MCF 10A (cell line): ENCODE measurements at regions of chr5 and their contacts with region 1.

Region 1: GRCh38 chr5:141968914-141969608 is at the start of gene RNF14:
- DNase-seq: peak; percentile 97
- H3K4me3 Mint-ChIP-seq: peak within 1 kb of the TSS; percentile 88
- H3K27ac Mint-ChIP-seq: peak within 1 kb of the TSS; percentile 99
- H3K4me1 Mint-ChIP-seq: peaks cover 24% of the 10 kb centered on the region
- H3K27me3 Mint-ChIP-seq: no peaks in the 10 kb centered on the region
- CTCF ChIP-seq: peak; percentile 100
- total RNA-seq, gene RNF14: 78.0 and 81.3 TPM in 2 replicates

Region 2: GRCh38 chr5:141465351-141465750 is 503.7 kb before region 1 on chr5:
- CTCF ChIA-PET with region 1: no interaction called
- POLR2A ChIA-PET with region 1: no interaction called
- intact Hi-C with region 1: no loop called
- DNase-seq: no peak
- H3K4me3 Mint-ChIP-seq: no peak overlapping the region
- H3K27ac Mint-ChIP-seq: no peak overlapping the region
- H3K4me1 Mint-ChIP-seq: no peaks in the 10 kb centered on the region
- H3K27me3 Mint-ChIP-seq: no peaks in the 10 kb centered on the region
- CTCF ChIP-seq: no peak

Region 3: DNA sequence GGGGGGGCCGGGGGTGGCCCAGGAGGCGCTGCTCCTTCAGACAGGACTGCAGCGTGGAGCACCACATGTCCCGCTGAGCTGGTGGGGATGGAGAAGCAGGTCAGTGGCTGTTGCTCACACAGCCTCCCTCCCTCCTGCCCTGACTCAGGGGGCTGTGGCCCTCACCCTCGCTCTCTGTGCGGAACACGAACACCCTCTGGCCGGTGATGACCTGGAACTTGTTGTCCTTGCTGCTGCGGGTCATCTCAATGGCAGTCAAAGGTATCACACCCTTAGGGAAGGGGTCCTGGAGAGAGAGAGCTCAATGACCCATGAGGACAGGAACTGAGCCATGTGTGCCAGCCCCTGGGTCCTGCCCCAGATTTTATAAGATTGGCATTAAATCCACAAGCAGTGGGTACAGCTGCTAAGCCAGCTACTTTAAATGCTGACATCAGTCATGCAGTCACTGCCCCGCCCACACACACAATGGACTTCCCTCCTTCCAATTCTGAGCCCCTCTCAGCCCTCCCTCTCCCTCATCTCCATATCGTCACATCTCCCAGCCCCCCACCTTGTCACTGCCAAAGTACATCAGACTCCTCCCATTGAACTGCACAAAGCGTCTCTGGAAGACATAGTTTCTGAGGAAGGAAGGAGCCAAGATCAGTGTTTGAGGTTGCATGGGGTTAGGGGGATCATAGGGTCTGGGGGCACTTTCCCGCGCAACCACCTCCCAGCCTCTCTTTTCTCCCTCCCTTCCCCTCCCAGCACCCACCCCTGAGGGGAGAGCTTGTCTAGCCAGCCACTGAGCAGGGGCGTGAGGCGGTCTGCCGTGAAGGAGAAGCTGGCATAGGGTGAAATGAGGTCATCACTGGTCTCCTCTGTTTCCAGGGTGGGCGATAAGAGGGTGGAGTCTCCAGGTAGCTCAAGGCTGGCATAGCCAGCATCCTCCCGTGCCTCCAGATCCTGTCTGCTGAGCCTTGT is 295.9 kb before region 1 on chr5:
- CTCF ChIA-PET with region 1: interaction called, 15 read pairs
- POLR2A ChIA-PET with region 1: no interaction called
- intact Hi-C with region 1: no loop called
- DNase-seq: no peak
- H3K4me3 Mint-ChIP-seq: no peak overlapping the region
- H3K27ac Mint-ChIP-seq: no peak overlapping the region
- H3K4me1 Mint-ChIP-seq: no peaks in the 10 kb centered on the region
- H3K27me3 Mint-ChIP-seq: no peaks in the 10 kb centered on the region
- CTCF ChIP-seq: no peak

Region 4: GRCh38 chr5:141811287-141812155 is 157.5 kb before region 1 on chr5:
- CTCF ChIA-PET with region 1: interaction called, 4 read pairs
- POLR2A ChIA-PET with region 1: no interaction called
- intact Hi-C with region 1: loop called (anchors 10 kb)
- DNase-seq: peak; percentile 32
- H3K4me3 Mint-ChIP-seq: no peak overlapping the region
- H3K27ac Mint-ChIP-seq: no peak overlapping the region
- H3K4me1 Mint-ChIP-seq: no peaks in the 10 kb centered on the region
- H3K27me3 Mint-ChIP-seq: peaks cover 31% of the 10 kb centered on the region
- CTCF ChIP-seq: peak; percentile 74

Region 5: DNA sequence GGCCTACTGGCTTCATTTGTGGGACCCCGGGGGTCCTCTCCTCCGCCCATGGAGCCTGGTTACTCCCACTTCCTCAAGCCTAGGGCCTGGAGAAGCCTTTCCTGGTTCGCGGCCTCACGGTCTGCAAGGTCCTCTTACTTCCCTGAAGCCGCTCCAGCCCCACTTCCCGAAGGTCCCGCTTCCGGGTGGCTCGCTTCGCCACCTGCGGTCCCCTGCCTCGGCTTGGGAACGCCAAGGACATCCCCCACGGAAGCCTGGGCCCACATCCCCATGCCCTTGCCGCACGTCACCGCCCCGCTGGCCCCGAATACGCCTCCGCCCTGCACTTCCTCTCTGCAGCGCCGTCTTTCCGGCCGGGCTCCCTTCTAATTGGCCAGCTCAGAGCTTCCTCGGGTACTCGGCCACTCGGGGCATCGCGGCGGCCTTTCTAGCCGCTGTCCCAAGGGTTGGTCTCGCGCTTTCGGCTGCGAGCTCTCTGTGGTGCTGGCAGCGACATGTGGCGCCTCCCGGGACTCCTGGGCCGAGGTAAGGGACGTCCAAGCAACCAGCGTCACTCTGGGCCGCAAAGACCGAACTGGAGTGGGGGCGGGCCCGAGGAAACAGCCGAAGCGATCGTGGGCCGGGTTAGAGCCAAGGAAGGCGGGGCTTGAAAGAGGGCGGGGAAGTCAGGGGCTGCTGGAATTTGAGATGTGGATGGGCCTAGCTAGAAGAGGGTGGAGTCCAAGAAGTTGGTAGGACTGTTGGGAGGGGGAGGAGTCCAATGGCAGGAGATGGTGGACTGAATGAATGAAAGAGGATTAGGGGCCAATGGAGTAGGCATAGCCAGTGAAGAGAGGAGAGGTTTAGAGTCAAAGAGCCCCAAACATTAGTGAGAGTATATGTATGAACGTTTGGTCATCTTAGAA is 45.4 kb before region 1 on chr5 and contains the start of gene DELE1:
- CTCF ChIA-PET with region 1: interaction called, 7 read pairs
- POLR2A ChIA-PET with region 1: interaction called, 57 read pairs
- intact Hi-C with region 1: no loop called
- DNase-seq: peak; percentile 98
- H3K4me3 Mint-ChIP-seq: peak within 1 kb of the TSS; percentile 75
- H3K27ac Mint-ChIP-seq: peak within 1 kb of the TSS; percentile 94
- H3K4me1 Mint-ChIP-seq: peaks cover 11% of the 10 kb centered on the region
- H3K27me3 Mint-ChIP-seq: no peaks in the 10 kb centered on the region
- CTCF ChIP-seq: no peak
- total RNA-seq, gene DELE1: 88.1 and 91.3 TPM in 2 replicates

Region 6: GRCh38 chr5:141992349-141992963 is 23.4 kb after region 1 on chr5:
- CTCF ChIA-PET with region 1: interaction called, 62 read pairs
- POLR2A ChIA-PET with region 1: interaction called, 37 read pairs
- intact Hi-C with region 1: no loop called
- DNase-seq: peak; percentile 88
- H3K4me3 Mint-ChIP-seq: no peak overlapping the region
- H3K27ac Mint-ChIP-seq: no peak overlapping the region
- H3K4me1 Mint-ChIP-seq: no peaks in the 10 kb centered on the region
- H3K27me3 Mint-ChIP-seq: no peaks in the 10 kb centered on the region
- CTCF ChIP-seq: peak; percentile 82

Region 7: DNA sequence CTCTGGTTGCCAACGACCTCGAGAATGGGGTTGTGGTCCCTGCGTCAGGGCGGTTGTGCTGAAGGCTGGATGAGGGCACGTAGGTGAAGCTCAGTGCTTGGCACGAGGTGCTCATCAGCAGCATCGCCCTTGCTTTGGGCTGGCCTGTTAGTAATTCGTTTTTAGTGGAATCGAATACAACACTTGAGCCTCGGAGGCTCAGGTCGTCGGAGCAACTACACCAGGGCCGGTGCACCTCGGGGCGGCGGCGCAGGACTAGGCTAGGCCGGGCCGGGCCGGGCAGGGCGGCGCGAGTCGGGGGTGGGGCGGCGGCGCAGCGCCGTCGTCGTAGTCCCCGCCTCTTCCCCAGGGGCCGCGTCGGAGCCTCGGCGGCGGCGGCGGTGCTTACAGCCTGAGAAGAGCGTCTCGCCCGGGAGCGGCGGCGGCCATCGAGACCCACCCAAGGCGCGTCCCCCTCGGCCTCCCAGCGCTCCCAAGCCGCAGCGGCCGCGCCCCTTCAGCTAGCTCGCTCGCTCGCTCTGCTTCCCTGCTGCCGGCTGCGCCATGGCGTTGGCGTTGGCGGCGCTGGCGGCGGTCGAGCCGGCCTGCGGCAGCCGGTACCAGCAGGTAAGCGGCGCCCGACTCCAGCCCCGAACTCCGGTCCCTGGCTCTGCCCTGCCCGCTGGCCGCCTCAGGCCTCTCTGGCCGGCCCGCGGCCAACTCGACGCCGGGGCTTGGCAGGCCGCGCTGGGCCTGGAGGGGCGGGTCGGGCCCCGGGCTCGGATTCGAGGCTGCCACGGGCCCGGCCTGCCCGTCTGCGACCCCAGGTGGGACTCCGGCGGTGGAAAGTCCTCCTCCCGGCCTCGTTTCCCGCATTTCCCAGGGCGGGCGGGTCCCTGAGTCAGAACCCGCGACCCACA is 139.6 kb after region 1 on chr5 and contains the start of gene NDFIP1:
- CTCF ChIA-PET with region 1: interaction called, 5 read pairs
- POLR2A ChIA-PET with region 1: interaction called, 37 read pairs
- intact Hi-C with region 1: no loop called
- DNase-seq: peak; percentile 88
- H3K4me3 Mint-ChIP-seq: peak within 1 kb of the TSS; percentile 94
- H3K27ac Mint-ChIP-seq: peak within 1 kb of the TSS; percentile 86
- H3K4me1 Mint-ChIP-seq: peaks cover 16% of the 10 kb centered on the region
- H3K27me3 Mint-ChIP-seq: no peaks in the 10 kb centered on the region
- CTCF ChIP-seq: no peak
- total RNA-seq, gene NDFIP1: 50.8 and 61.6 TPM in 2 replicates

Region 8: GRCh38 chr5:142186857-142187594 is 218.0 kb after region 1 on chr5:
- CTCF ChIA-PET with region 1: no interaction called
- POLR2A ChIA-PET with region 1: no interaction called
- intact Hi-C with region 1: no loop called
- DNase-seq: no peak
- H3K4me3 Mint-ChIP-seq: no peak overlapping the region
- H3K27ac Mint-ChIP-seq: no peak overlapping the region
- H3K4me1 Mint-ChIP-seq: no peaks in the 10 kb centered on the region
- H3K27me3 Mint-ChIP-seq: peaks cover 14% of the 10 kb centered on the region
- CTCF ChIP-seq: no peak

Region 9: GRCh38 chr5:142356716-142357473 is 387.8 kb after region 1 on chr5:
- CTCF ChIA-PET with region 1: no interaction called
- POLR2A ChIA-PET with region 1: no interaction called
- intact Hi-C with region 1: no loop called
- DNase-seq: peak; percentile 95
- H3K4me3 Mint-ChIP-seq: peak overlapping the region; percentile 82
- H3K27ac Mint-ChIP-seq: peak overlapping the region; percentile 86
- H3K4me1 Mint-ChIP-seq: peaks cover 6% of the 10 kb centered on the region
- H3K27me3 Mint-ChIP-seq: no peaks in the 10 kb centered on the region
- CTCF ChIP-seq: no peak

Region 10: DNA sequence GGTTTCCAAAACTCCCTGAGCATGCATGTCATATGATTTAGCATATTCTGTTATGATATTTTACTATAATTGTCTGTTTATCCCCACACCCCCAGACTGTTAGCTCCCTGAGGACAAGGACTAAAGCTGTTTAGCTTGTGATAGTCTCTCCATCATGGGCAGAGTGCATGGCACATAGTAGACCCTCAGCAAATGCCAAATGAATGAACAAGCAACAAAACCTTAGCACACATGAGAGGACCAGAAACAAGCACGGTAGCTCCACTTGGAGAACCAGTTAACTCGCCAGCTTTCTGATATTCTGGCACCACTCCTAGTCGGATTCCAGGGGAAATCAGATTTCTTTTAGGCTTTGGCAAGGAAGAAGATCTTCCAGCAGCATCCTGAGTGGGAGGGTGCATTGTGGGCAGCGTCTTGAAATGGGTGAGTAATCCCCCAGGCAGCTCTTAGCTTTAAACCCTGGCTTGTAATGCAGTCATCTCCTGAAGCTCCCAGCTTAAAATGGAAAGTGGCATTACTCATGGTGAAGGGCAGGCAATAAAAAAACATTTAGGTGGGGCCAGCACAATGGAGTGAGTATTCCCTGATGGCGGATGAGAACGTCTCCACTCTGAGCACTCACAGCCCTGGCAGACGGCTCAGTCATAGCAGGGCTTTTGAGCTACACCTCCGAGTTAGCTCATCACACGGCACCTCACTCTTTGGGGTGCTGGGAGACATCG is 675.7 kb after region 1 on chr5:
- CTCF ChIA-PET with region 1: no interaction called
- POLR2A ChIA-PET with region 1: no interaction called
- intact Hi-C with region 1: no loop called
- DNase-seq: peak; percentile 99
- H3K4me3 Mint-ChIP-seq: peak overlapping the region; percentile 48
- H3K27ac Mint-ChIP-seq: peak overlapping the region; percentile 85
- H3K4me1 Mint-ChIP-seq: peaks cover 26% of the 10 kb centered on the region
- H3K27me3 Mint-ChIP-seq: no peaks in the 10 kb centered on the region
- CTCF ChIP-seq: no peak